ENCODE measurements at regions of chr20 and their contacts with region 1.

Region 1: GRCh38 chr20:9978397-9979004 is 56.3 kb upstream of the ANKEF1 start:
- DNase-seq: peak; percentile 63 to 94
- ATAC-seq: peak; percentile 94 to 95
- H3K4me3 ChIP-seq: no peak overlapping the region; the same call in 2 of the 3 replicates
- H3K27ac ChIP-seq: peak overlapping the region; percentile 33 to 74
- H3K4me1 ChIP-seq: peaks cover 21% of the 10 kb centered on the region; the same call in 2 of the 3 replicates
- CTCF ChIP-seq: peak; percentile 100
- EP300 ChIP-seq: peak in 1 of 2 experiments; percentile 31; a peak in 1 of 5 replicates
- POLR2A ChIP-seq: no peak
- RAD21 ChIP-seq: peak; percentile 100

Region 2: GRCh38 chr20:9999645-10000044 is 21.1 kb after region 1 on chr20:
- CTCF ChIA-PET with region 1: interaction called, 10 read pairs
- POLR2A ChIA-PET with region 1: no interaction called
- DNase-seq: peak in 1 of 2 experiments; percentile 25
- ATAC-seq: no peak
- H3K4me3 ChIP-seq: no peak overlapping the region
- H3K27ac ChIP-seq: peak overlapping the region in 1 of 2 experiments; percentile 47; a peak in 3 of 6 replicates
- H3K4me1 ChIP-seq: peaks cover 8% of the 10 kb centered on the region; the same call in 2 of the 3 replicates
- CTCF ChIP-seq: no peak
- EP300 ChIP-seq: no peak
- POLR2A ChIP-seq: no peak
- RAD21 ChIP-seq: no peak

Region 3: DNA sequence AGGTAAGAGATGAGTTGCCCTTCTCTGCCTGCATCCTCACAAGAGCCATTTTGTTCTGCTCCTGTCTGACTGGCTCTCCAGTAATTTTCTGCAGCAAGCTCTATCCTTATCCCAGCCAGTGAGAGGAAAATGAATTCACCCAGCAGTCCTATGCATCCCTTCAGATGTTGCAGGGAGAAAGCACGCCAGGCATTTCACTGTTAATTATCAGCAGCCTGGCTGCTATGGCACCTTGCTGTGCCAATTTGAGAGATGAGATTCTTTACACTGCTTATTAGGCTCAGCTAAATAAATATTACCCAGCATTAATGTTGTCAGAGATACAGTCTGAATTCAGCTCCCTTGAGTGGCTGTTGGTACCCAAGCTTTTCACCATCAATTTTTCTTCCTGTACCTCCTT is 179.0 kb after region 1 on chr20:
- CTCF ChIA-PET with region 1: interaction called, 10 read pairs
- POLR2A ChIA-PET with region 1: no interaction called
- DNase-seq: no peak
- ATAC-seq: no peak
- H3K4me3 ChIP-seq: no peak overlapping the region
- H3K27ac ChIP-seq: no peak overlapping the region
- H3K4me1 ChIP-seq: no peaks in the 10 kb centered on the region
- CTCF ChIP-seq: no peak
- EP300 ChIP-seq: no peak
- POLR2A ChIP-seq: no peak
- RAD21 ChIP-seq: no peak

Region 4: GRCh38 chr20:10249048-10249770 is 270.7 kb after region 1 on chr20:
- CTCF ChIA-PET with region 1: interaction called, 17 read pairs
- POLR2A ChIA-PET with region 1: no interaction called
- DNase-seq: peak; percentile 51 to 94
- ATAC-seq: peak; percentile 35 to 58; a peak in 4 of 6 replicates
- H3K4me3 ChIP-seq: no peak overlapping the region
- H3K27ac ChIP-seq: peak overlapping the region; percentile 89 to 91
- H3K4me1 ChIP-seq: peaks cover 78% of the 10 kb centered on the region
- CTCF ChIP-seq: no peak
- EP300 ChIP-seq: peak; percentile 85 to 92; a peak in 3 of 5 replicates
- POLR2A ChIP-seq: no peak
- RAD21 ChIP-seq: peak; percentile 37 to 59

Region 5: DNA sequence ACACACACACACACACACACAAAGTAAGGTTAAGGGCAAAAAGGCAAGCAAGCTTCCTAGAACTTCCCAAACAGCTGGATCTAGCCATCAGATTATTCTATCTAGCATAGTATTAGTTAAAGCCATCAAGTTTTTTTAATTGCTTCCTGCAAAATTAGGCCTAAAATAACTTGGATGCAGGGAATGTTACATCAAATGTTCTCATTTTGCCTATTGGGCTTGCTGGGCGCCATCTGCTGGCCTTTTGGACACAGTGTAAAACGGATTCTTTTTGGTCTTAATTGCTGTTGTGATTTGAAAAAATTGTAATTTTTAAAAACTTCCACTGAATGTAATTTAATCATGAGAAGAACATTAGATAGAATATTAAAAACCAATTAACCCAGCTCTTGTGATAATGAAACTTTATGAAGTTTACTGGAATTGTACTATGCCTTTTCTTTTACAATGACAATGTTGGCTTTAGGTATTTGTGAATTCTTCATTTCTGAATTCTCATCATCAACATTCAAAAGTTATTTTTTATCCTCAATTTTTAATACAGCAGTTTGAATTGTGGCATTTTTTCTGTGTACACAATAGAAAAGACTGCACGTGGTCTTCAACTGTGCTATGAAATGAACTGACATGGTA is 448.7 kb after region 1 on chr20:
- CTCF ChIA-PET with region 1: interaction called, 123 read pairs
- POLR2A ChIA-PET with region 1: interaction called, 6 read pairs
- DNase-seq: peak; percentile 55 to 84
- ATAC-seq: peak in 1 of 2 experiments; percentile 64; a peak in 3 of 6 replicates
- H3K4me3 ChIP-seq: no peak overlapping the region
- H3K27ac ChIP-seq: peak overlapping the region; percentile 90 to 96
- H3K4me1 ChIP-seq: peaks cover 80% of the 10 kb centered on the region
- CTCF ChIP-seq: peak; percentile 98
- EP300 ChIP-seq: no peak
- POLR2A ChIP-seq: no peak
- RAD21 ChIP-seq: peak; percentile 87 to 90

Region 6: GRCh38 chr20:10553326-10553984 is 575.0 kb after region 1 on chr20:
- CTCF ChIA-PET with region 1: interaction called, 14 read pairs
- POLR2A ChIA-PET with region 1: no interaction called
- DNase-seq: peak; percentile 54 to 85
- ATAC-seq: peak; percentile 70 to 84; a peak in 5 of 6 replicates
- H3K4me3 ChIP-seq: no peak overlapping the region
- H3K27ac ChIP-seq: peak overlapping the region; percentile 37 to 46; a peak in 4 of 6 replicates
- H3K4me1 ChIP-seq: peaks cover 55% of the 10 kb centered on the region
- CTCF ChIP-seq: peak; percentile 97
- EP300 ChIP-seq: no peak
- POLR2A ChIP-seq: no peak
- RAD21 ChIP-seq: peak; percentile 98 to 99